ENCODE measurements at regions of chr16 and their contacts with region 1.

Region 1: DNA sequence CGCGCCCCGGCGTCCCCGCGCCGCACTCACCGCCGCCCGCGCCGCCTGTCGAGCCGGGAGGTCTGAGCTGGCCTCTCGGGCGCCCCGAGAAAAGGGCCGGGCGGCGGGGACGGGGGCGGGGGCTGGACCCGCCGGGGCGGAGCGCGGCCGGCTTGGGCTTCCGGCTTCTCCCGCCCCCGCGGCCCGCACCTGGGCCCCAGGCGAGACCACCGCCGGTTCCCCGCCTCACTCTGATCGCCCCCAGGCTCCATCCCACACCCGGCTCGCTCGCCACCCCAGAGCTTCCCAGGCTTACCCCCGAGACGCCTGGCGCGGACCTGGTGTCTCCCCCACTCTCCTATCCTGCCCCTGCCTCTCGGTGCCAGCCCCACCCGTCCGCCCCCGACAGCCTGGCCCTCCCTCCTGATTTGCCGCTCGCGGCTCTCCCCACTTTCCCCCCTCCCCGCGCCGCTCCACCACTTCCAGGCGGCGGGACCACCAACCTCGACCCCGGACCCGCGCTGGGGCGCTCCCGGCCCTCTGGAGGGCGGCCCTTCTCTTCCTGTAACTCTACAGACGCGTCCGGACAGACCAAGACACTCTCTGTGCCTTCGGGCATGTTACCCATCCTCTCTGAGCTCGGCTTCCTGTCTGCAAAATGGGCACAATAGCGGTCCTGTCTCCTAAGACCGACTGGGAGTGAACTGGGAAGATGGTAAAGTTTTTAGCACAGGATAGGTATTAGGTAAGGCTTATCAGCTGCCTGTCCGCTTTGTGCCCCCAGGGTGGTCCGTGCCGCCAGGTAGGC is at the start of gene LITAF:
- DNase-seq: peak; percentile 87
- H3K4me3 Mint-ChIP-seq: peak within 1 kb of the TSS; percentile 90
- H3K27ac Mint-ChIP-seq: peak within 1 kb of the TSS; percentile 89
- H3K4me1 Mint-ChIP-seq: peaks cover 38% of the 10 kb centered on the region
- H3K27me3 Mint-ChIP-seq: peaks cover 3% of the 10 kb centered on the region
- total RNA-seq, gene LITAF: 163 and 170 TPM in 2 replicates

Region 2: DNA sequence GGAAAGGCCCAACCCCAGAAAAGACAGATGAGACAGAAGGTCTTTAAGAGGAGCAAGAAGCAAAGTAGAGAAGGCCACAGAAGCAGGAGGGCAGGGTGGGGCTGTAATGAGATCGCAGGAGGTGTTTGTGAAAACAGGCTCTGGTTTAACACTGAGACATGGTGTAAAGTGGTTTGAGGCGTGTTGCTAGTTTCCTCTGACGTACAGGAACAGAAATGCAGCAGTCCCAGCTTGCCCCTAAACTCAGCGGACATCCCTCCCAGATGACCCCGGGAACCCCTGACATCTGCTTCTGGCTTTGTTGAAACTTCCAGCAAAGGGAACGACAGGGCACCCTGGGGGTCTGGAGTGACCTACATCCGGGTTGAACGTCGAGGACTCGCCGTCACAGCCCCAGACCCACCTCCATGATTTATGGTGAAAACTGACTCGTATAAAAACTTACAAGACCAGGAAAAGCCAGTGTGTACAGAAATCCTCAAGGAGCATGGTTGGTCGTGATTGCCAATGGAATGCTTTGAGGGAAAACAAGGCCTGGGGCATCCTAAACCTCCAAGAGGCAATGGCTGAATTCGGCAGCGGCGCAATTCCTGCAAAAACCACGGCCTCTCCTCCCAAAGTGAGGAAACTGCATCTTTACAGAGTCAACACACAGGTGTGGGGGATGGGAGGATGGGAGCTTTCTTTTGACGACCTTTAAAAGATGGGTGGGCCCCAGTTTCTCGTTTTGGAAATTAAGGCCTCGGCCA is 26.2 kb before region 1 on chr16:
- intact Hi-C with region 1: loop called (anchors 1 kb)
- DNase-seq: peak; percentile 90
- H3K4me3 Mint-ChIP-seq: peak overlapping the region; percentile 89
- H3K27ac Mint-ChIP-seq: peak overlapping the region; percentile 92
- H3K4me1 Mint-ChIP-seq: peaks cover 69% of the 10 kb centered on the region
- H3K27me3 Mint-ChIP-seq: no peaks in the 10 kb centered on the region

Region 3: GRCh38 chr16:11600236-11600635 is 13.2 kb after region 1 on chr16:
- intact Hi-C with region 1: no loop called
- DNase-seq: no peak
- H3K4me3 Mint-ChIP-seq: no peak overlapping the region
- H3K27ac Mint-ChIP-seq: peak overlapping the region; percentile 47
- H3K4me1 Mint-ChIP-seq: peaks cover 11% of the 10 kb centered on the region
- H3K27me3 Mint-ChIP-seq: peaks cover 7% of the 10 kb centered on the region

Region 4: DNA sequence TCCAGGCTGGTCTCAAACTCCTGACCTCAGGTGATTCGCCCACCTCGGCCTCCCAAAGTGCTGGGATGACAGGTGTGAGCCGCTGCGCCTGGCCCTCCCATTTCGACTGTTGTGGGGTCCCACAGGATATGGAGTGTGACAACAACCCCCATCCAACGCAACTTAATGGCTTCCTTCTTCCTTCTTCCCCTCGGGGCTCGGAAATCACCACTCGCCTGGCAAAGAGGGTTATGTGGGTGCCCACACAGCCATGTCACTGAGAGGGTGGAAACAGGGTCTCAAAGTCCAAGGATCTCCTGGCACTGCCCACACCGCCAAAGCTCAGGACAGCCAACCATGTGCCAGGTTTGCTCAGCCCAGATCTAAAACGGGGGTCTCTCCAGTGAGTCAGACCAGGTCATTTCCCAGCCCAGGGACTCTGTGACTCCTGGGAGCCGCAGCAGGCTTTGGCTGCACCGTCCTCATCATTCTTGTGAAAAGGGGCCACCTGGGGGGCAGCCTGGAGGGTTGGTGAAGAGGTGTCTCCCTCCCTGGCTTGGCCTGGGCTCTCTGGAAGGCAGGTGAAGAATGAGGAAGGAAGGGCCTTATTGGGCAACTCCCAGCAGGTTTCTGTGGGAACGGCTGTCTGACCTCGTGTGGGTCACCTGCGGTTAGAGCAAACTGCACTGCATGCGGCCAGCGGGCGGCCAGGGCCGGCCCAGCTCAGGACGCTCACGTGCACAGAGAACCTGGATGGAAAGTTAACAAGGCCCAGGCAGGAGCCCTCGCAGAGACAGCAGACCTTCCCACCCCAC is 25.0 kb after region 1 on chr16:
- intact Hi-C with region 1: no loop called
- DNase-seq: no peak
- H3K4me3 Mint-ChIP-seq: no peak overlapping the region
- H3K27ac Mint-ChIP-seq: no peak overlapping the region
- H3K4me1 Mint-ChIP-seq: peaks cover 3% of the 10 kb centered on the region
- H3K27me3 Mint-ChIP-seq: peaks cover 8% of the 10 kb centered on the region

Region 5: DNA sequence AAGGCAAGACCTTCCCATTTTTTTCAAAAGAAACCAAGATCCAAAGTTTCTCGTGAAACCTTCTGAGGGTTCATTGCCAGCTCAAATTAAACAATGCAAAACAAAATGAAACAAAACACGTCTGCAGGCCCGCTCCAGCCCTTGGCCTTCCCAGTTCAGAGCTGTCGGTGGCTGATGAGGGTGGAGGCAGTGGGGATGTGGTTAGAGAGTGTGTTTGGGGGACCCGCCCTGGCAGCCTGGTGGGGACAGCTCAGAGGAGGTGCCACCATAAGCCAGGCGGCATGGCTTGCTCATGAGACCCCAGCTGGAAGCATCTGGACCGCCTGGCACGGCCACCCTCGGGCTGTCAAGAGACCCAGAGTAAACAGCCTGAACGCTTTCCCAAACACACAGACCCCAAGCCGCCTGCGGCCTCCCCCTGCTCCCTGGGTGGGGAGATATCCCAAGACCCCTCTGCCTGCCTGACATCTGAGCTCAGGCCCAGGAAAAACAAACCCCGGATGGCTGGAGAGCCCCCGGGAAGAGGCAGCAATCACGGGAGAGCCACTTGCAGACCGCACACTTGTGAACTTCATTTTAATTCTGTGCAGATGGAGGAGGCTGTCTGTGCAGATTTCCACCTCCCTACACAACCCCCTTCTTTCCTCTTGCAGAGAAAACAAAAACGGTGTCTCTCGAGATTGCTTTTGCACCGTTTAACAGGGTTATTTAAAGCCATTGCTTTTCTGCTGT is 35.0 kb after region 1 on chr16:
- intact Hi-C with region 1: loop called (anchors 5 kb)
- DNase-seq: peak; percentile 84
- H3K4me3 Mint-ChIP-seq: peak overlapping the region; percentile 80
- H3K27ac Mint-ChIP-seq: peak overlapping the region; percentile 86
- H3K4me1 Mint-ChIP-seq: peaks cover 41% of the 10 kb centered on the region
- H3K27me3 Mint-ChIP-seq: no peaks in the 10 kb centered on the region

Region 6: GRCh38 chr16:11639925-11640899 is 53.2 kb after region 1 on chr16:
- intact Hi-C with region 1: loop called (anchors 2 kb)
- DNase-seq: no peak
- H3K4me3 Mint-ChIP-seq: no peak overlapping the region
- H3K27ac Mint-ChIP-seq: no peak overlapping the region
- H3K4me1 Mint-ChIP-seq: peaks cover 8% of the 10 kb centered on the region
- H3K27me3 Mint-ChIP-seq: peaks cover 21% of the 10 kb centered on the region

Region 7: GRCh38 chr16:11783319-11784037 is 196.4 kb after region 1 on chr16:
- intact Hi-C with region 1: loop called (anchors 2 kb)
- DNase-seq: peak; percentile 89
- H3K4me3 Mint-ChIP-seq: peak overlapping the region; percentile 82
- H3K27ac Mint-ChIP-seq: peak overlapping the region; percentile 97
- H3K4me1 Mint-ChIP-seq: peaks cover 61% of the 10 kb centered on the region
- H3K27me3 Mint-ChIP-seq: no peaks in the 10 kb centered on the region

Region 8: GRCh38 chr16:11797166-11797956 is 210.3 kb after region 1 on chr16 and contains the start of gene ZC3H7A:
- intact Hi-C with region 1: loop called (anchors 5 kb)
- DNase-seq: peak; percentile 98
- H3K4me3 Mint-ChIP-seq: peak within 1 kb of the TSS; percentile 93
- H3K27ac Mint-ChIP-seq: peak within 1 kb of the TSS; percentile 95
- H3K4me1 Mint-ChIP-seq: peaks cover 69% of the 10 kb centered on the region
- H3K27me3 Mint-ChIP-seq: no peaks in the 10 kb centered on the region
- total RNA-seq, gene ZC3H7A: 58.3 and 64.1 TPM in 2 replicates

Measured in activated CD4-positive, alpha-beta T cell treated with anti-CD3 and anti-CD28 coated beads, Interleukin-2, amount 10 ng/mL, durations not matched to agents 24 days and 14 days (primary cell).